Activated CD8-positive, alpha-beta T cell treated with anti-CD3 and anti-CD28 coated beads for 36 hours (primary cell): ENCODE measurements at regions of chr14 and their contacts with region 1.

Region 1: GRCh38 chr14:22781586-22781991 is 15.1 kb downstream of the OXA1L start:
- DNase-seq: no peak
- ATAC-seq: no peak
- H3K4me3 Mint-ChIP-seq: no peak overlapping the region
- H3K27ac Mint-ChIP-seq: no peak overlapping the region
- H3K4me1 Mint-ChIP-seq: no peaks in the 10 kb centered on the region
- H3K27me3 Mint-ChIP-seq: no peaks in the 10 kb centered on the region
- CTCF ChIP-seq: no peak

Region 2: GRCh38 chr14:22766456-22767322 is 14.9 kb before region 1 on chr14 and contains the start of gene OXA1L:
- CTCF ChIA-PET with region 1: interaction called, 3 read pairs
- POLR2A ChIA-PET with region 1: interaction called, 30 read pairs
- intact Hi-C with region 1: no loop called
- DNase-seq: peak; percentile 97
- ATAC-seq: peak; percentile 90
- H3K4me3 Mint-ChIP-seq: peak within 1 kb of the TSS; percentile 85
- H3K27ac Mint-ChIP-seq: peak within 1 kb of the TSS; percentile 98
- H3K4me1 Mint-ChIP-seq: peaks cover 26% of the 10 kb centered on the region
- H3K27me3 Mint-ChIP-seq: no peaks in the 10 kb centered on the region
- CTCF ChIP-seq: no peak
- total RNA-seq, gene OXA1L: 134 to 140 TPM